Adrenal gland (tissue), 19 donors: ENCODE measurements at regions of chr5 and their contacts with region 1.

Region 1: DNA sequence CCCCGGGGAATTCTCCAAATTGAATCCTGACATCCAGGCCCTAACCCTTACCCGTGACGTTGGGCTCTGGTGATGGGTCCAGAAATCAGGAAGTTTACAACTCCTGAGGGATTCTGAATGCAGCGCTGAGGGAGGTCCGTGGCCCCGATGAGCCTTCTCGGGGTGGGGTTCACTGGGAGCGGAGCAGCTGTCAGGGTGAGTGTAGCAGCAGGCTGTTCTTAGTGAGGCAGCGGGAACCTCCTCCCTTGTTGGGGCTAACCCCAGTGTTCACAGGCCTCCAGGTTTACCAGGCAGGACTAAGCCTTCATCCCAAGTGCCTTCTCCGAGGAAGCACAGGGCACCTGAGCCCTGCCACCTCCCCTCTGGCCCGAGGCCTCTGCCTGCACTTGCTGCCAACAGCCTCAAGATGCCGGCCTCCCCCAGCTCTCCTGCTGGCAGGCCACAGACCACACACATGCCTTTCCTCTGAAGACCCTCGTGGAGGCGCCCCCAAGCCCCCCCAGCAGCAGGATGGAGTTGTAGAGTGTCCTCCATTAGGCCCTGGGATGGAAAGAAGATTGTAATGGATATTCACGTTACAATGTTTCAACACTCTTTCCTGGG is 7.3 kb upstream of the ADAMTS16 start:
- DNase-seq: no peak
- H3K4me3 ChIP-seq: no peak overlapping the region
- H3K27ac ChIP-seq: no peak overlapping the region
- H3K4me1 ChIP-seq: no peaks in the 10 kb centered on the region
- H3K27me3 ChIP-seq: no peaks in the 10 kb centered on the region
- CTCF ChIP-seq: no peak
- POLR2A ChIP-seq: no peak

Region 2: GRCh38 chr5:4873652-4874051 is 259.1 kb before region 1 on chr5:
- intact Hi-C with region 1: loop called in 1 of 2 experiments (anchors 5 kb)
- DNase-seq: no peak
- H3K4me3 ChIP-seq: no peak overlapping the region
- H3K27ac ChIP-seq: no peak overlapping the region
- H3K4me1 ChIP-seq: no peaks in the 10 kb centered on the region
- H3K27me3 ChIP-seq: peaks cover 7% of the 10 kb centered on the region
- CTCF ChIP-seq: no peak
- POLR2A ChIP-seq: no peak